ENCODE measurements at regions of chr10 and their contacts with region 1.

Region 1: GRCh38 chr10:117419921-117420320 is 44.7 kb upstream of the PDZD8 start:
- DNase-seq: no peak
- H3K4me3 ChIP-seq: no peak overlapping the region
- H3K27ac ChIP-seq: no peak overlapping the region
- H3K4me1 ChIP-seq: no peaks in the 10 kb centered on the region
- CTCF ChIP-seq: no peak

Region 2: GRCh38 chr10:116826803-116827202 is 593.1 kb before region 1 on chr10:
- CTCF ChIA-PET with region 1: no interaction called
- POLR2A ChIA-PET with region 1: no interaction called
- intact Hi-C with region 1: no loop called
- DNase-seq: no peak
- H3K4me3 ChIP-seq: no peak overlapping the region
- H3K27ac ChIP-seq: no peak overlapping the region
- H3K4me1 ChIP-seq: no peaks in the 10 kb centered on the region
- CTCF ChIP-seq: no peak

Region 3: DNA sequence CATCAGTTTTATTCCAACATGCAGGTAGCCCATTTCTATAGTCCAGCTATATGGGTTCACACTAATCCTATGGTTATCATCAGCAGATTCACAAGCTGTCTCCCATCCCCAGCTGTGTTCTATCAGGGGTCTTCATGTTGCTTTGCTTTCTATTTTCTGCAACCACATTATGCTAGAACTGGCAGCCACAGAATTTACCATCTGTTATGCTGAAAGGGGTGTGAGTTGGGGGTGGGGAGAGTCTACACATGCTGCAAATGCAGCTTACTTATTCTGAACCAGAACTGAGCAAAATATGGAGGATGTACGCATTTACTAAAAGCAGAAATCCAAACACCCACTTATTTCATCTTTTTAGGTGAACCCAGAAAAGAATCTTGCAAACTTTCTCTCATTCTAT is 447.8 kb before region 1 on chr10:
- CTCF ChIA-PET with region 1: interaction called, 10 read pairs
- POLR2A ChIA-PET with region 1: no interaction called
- intact Hi-C with region 1: no loop called
- DNase-seq: no peak
- H3K4me3 ChIP-seq: no peak overlapping the region
- H3K27ac ChIP-seq: no peak overlapping the region
- H3K4me1 ChIP-seq: no peaks in the 10 kb centered on the region
- CTCF ChIP-seq: no peak

Region 4: GRCh38 chr10:117260084-117260483 is 159.8 kb before region 1 on chr10:
- CTCF ChIA-PET with region 1: no interaction called
- POLR2A ChIA-PET with region 1: no interaction called
- intact Hi-C with region 1: loop called (anchors 5 kb)
- DNase-seq: no peak
- H3K4me3 ChIP-seq: no peak overlapping the region
- H3K27ac ChIP-seq: no peak overlapping the region
- H3K4me1 ChIP-seq: no peaks in the 10 kb centered on the region
- CTCF ChIP-seq: no peak

Measured in OCI-LY7 (cell line).